B cell (primary cell): ENCODE measurements at regions of chr6 and their contacts with region 1.

Region 1: DNA sequence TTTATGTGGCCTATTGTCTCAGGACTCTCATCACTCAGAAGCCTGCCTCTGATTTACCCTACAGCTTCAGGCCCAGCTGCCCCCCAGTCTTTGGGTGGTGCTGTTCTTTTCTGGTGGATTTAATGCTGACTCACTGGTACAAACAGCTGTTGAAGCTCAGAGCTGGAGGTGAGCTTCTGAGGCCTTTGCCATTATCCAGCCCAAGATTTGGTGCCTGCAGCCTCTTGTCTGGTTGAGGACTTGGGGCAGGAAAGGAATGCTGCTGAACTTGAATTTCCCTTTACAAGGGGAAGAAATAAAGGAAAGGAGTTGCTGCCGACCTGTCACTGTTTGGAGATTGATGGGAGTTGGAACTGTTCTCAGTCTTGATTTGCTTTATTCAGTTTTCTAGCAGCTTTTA is 19.8 kb downstream of the ABCF1 start:
- DNase-seq: no peak
- ATAC-seq: no peak
- H3K4me3 ChIP-seq: no peak overlapping the region
- H3K4me3 Mint-ChIP-seq: no peak overlapping the region
- H3K27ac ChIP-seq: no peak overlapping the region
- H3K27ac Mint-ChIP-seq: no peak overlapping the region
- H3K4me1 ChIP-seq: no peaks in the 10 kb centered on the region
- H3K4me1 Mint-ChIP-seq: no peaks in the 10 kb centered on the region
- H3K27me3 ChIP-seq: no peaks in the 10 kb centered on the region
- H3K27me3 Mint-ChIP-seq: no peaks in the 10 kb centered on the region
- CTCF ChIP-seq: no peak

Region 2: GRCh38 chr6:30548375-30548774 is 42.6 kb before region 1 on chr6:
- CTCF ChIA-PET with region 1: interaction called, 154 read pairs
- POLR2A ChIA-PET with region 1: no interaction called
- intact Hi-C with region 1: loop called (anchors 2 kb)
- DNase-seq: no peak
- ATAC-seq: no peak
- H3K4me3 ChIP-seq: no peak overlapping the region
- H3K4me3 Mint-ChIP-seq: no peak overlapping the region
- H3K27ac ChIP-seq: no peak overlapping the region
- H3K27ac Mint-ChIP-seq: no peak overlapping the region
- H3K4me1 ChIP-seq: peaks cover 6 to 12% of the 10 kb centered on the region in 2 donors
- H3K4me1 Mint-ChIP-seq: peaks cover 13% of the 10 kb centered on the region
- H3K27me3 ChIP-seq: no peaks in the 10 kb centered on the region
- H3K27me3 Mint-ChIP-seq: no peaks in the 10 kb centered on the region
- CTCF ChIP-seq: no peak

Region 3: GRCh38 chr6:30562470-30563425 is 28.2 kb before region 1 on chr6:
- CTCF ChIA-PET with region 1: no interaction called
- POLR2A ChIA-PET with region 1: no interaction called
- intact Hi-C with region 1: no loop called
- DNase-seq: no peak
- ATAC-seq: no peak
- H3K4me3 ChIP-seq: no peak overlapping the region
- H3K4me3 Mint-ChIP-seq: no peak overlapping the region
- H3K27ac ChIP-seq: no peak overlapping the region
- H3K27ac Mint-ChIP-seq: no peak overlapping the region
- H3K4me1 ChIP-seq: peaks cover 9 to 10% of the 10 kb centered on the region in 2 donors
- H3K4me1 Mint-ChIP-seq: peaks cover 15% of the 10 kb centered on the region
- H3K27me3 ChIP-seq: no peaks in the 10 kb centered on the region
- H3K27me3 Mint-ChIP-seq: no peaks in the 10 kb centered on the region
- CTCF ChIP-seq: no peak

Region 4: DNA sequence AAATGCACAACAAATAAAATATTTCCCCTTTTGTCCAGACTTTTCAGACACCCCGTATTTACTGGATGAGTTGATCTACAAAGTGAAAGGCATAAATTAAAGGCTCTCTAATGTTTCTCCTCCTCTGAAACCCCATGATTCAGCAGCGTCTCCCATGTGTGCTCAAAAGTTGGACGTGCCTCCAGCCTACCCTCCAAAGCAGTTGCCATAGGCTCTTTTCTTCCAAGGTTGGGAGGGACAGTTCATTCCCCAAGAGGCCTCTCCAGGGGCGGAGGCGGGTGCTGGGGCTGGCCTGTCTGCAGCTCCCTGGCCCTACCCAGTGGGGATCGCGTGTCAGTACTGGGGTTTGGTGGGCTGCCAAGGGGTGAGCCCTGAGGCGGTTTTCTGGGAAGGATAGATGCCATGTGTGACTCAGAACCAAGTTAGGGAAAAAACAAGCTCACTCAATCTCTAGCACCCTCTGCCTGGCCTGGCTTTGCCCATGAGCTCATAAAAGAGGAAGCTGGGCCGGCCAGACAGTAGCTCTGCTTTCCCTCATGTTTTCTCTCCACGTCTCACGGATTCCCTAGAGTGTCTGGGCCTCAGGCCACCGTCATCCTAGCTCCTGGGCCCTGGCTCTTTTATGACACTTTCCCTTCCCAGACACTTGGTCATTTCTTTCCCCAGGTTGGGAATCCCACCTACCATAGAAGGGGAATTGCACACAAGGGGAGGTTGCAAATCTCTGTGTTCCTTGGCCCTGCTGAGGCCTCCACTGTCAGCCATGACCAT is 161.3 kb after region 1 on chr6:
- CTCF ChIA-PET with region 1: no interaction called
- POLR2A ChIA-PET with region 1: no interaction called
- intact Hi-C with region 1: no loop called
- DNase-seq: no peak
- ATAC-seq: no peak
- H3K4me3 ChIP-seq: no peak overlapping the region
- H3K4me3 Mint-ChIP-seq: no peak overlapping the region
- H3K27ac ChIP-seq: no peak overlapping the region
- H3K27ac Mint-ChIP-seq: no peak overlapping the region
- H3K4me1 ChIP-seq: no peaks in the 10 kb centered on the region
- H3K4me1 Mint-ChIP-seq: no peaks in the 10 kb centered on the region
- H3K27me3 ChIP-seq: peaks cover 0 to 3% (median 0%) of the 10 kb centered on the region in 4 experiments
- H3K27me3 Mint-ChIP-seq: no peaks in the 10 kb centered on the region
- CTCF ChIP-seq: no peak